Colonic mucosa (tissue), 4 donors: ENCODE measurements at regions of chr9 and their contacts with region 1.

Region 1: GRCh38 chr9:134131304-134132207 is 4.3 kb upstream of the WDR5 start:
- DNase-seq: no peak
- H3K4me3 ChIP-seq: no peak overlapping the region
- H3K27ac ChIP-seq: no peak overlapping the region
- H3K4me1 ChIP-seq: no peaks in the 10 kb centered on the region
- H3K27me3 ChIP-seq: no peaks in the 10 kb centered on the region
- CTCF ChIP-seq: no peak

Region 2: DNA sequence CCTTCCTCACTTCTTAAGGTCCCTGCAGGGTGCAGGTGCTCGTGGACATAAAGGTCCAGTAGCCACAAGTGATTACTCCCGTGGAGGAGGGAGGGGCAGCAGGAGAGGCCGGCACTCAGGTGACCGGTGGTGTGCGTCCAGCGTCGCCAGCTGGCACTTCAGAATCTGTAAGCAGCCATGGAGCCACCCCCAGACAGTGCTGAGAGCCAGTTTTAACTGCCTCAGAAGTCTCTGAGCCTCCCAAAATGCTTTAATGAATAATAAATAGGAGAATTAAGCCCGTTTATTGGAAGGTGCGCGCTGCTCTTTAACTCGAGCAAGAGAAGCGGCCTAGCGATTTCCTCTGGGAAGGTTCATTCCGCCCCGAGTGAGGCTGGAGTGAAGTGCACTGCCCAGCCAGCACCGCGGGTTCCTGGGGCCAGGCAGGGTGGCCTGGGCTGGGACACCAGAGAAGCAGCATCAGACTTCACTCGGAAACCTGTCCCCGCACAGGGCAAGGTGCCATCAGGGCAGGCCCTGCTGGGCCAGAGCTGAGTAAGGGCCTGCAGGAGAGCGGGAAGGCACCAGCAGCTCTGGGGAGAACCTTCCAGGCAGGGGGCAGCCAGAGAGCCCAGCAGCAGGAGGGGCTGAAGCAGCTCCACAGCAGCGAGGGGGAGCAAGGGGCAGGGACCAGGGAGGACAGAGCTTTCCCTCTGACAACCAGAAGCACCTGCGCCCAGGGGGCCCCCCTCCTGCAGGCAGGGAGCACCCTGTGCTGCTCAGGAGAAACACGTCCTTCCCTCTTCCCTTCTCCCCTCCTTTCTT is 200.7 kb before region 1 on chr9:
- intact Hi-C with region 1: no loop called
- DNase-seq: no peak
- H3K4me3 ChIP-seq: no peak overlapping the region
- H3K27ac ChIP-seq: no peak overlapping the region
- H3K4me1 ChIP-seq: peaks cover 10% of the 10 kb centered on the region
- H3K27me3 ChIP-seq: no peaks in the 10 kb centered on the region
- CTCF ChIP-seq: no peak

Region 3: DNA sequence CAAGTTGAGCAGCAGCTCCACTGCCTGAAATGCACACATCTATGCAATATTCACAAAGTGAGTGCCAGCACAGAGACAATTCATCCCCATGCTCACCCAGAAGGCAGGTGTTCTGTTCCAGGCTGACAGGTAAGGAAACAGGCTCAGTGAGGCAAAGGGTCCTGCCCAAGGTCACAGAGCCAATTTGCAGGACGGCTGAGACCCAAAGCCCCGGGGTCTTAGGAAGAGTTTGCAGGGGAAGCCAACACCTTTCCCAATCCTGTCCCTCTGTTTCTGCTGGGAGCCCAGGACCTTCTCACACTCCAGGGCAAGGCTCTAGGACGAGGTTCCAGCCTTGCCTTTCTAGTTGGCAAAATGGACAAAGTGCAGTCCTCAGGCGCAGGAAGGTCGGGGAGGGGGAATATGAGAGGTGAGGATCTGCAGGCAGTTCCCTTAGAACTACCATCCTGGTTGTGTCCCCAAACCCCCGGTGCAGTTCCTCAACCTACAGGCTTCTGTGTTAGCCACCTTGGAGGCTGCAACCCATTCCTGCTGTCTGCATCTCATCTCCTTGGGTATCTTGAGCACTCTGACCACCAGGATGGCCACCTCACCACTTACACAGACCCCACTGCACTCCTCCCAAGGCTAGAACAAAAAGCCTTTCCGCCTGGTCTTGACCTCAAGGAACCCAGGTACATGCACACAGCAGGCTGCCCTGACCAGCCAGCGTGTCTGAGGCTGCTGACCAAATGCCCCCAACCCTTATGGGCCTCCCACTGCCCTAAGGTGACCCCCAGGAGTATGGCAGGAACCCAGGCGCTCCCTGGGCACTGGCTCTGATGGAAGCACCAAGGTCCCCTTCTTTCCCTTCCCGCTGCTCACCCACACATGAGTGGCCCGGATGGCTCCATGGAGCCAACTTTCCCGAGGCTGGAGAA is 61.8 kb before region 1 on chr9:
- intact Hi-C with region 1: loop called (anchors 2 kb)
- DNase-seq: no peak
- H3K4me3 ChIP-seq: no peak overlapping the region
- H3K27ac ChIP-seq: no peak overlapping the region
- H3K4me1 ChIP-seq: peaks cover 3% of the 10 kb centered on the region
- H3K27me3 ChIP-seq: no peaks in the 10 kb centered on the region
- CTCF ChIP-seq: no peak